Activated naive CD8-positive, alpha-beta T cell treated with anti-CD3 and anti-CD28 coated beads, Interleukin-2, amount 10 ng/mL, durations not matched to agents 7 days and 5 days (primary cell): ENCODE measurements at regions of chr17 and their contacts with region 1.

Region 1: DNA sequence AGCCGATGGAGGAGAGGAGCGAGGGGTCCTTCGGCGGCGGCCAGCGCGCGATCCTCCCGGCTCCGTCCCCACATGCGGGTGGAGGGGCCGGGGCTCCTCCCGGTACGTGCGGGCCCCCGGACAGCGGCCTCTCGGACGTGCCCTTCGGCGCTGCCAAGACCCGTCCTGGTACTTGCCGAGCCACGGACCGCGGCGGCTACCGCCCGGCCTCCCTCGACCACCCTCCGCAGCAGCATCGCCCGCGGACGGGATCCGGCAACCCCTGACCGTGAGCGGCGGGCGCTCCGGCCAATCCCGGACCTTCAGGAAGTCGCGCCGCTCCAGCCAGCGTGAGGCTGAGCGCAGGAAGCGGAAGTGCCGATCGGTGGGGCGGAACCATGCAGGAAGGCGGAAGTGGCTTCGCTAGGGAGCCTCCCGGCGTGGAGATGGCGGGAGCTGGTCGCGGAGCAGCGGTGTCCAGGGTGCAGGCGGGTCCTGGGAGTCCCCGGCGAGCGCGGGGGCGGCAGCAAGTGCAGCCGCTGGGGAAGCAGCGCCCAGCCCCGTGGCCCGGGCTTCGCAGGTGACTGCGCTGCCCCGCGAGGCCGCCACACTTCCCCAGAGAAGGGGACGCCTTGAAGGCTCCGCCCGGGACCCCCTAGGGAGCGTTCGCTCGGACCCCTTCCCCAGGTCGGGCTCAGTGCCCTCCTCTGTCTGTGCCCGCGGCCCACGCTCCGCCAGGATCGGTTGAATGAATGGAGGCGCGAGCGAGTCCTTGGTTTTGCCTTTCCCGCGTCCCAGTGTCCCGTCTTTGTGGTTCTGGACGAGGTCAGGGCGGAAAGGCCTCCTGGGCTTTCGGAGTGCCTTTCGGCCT is at the starts of genes CCDC137 and OXLD1:
- DNase-seq: peak; percentile 93
- ATAC-seq: peak; percentile 89
- H3K4me3 Mint-ChIP-seq: peak within 1 kb of the TSS; percentile 90
- H3K27ac Mint-ChIP-seq: peak within 1 kb of the TSS; percentile 98
- H3K4me1 Mint-ChIP-seq: peaks cover 43% of the 10 kb centered on the region
- H3K27me3 Mint-ChIP-seq: no peaks in the 10 kb centered on the region
- total RNA-seq, gene CCDC137: 31.3 to 32.0 TPM
- total RNA-seq, gene OXLD1: 56.6 to 60.1 TPM

Region 2: DNA sequence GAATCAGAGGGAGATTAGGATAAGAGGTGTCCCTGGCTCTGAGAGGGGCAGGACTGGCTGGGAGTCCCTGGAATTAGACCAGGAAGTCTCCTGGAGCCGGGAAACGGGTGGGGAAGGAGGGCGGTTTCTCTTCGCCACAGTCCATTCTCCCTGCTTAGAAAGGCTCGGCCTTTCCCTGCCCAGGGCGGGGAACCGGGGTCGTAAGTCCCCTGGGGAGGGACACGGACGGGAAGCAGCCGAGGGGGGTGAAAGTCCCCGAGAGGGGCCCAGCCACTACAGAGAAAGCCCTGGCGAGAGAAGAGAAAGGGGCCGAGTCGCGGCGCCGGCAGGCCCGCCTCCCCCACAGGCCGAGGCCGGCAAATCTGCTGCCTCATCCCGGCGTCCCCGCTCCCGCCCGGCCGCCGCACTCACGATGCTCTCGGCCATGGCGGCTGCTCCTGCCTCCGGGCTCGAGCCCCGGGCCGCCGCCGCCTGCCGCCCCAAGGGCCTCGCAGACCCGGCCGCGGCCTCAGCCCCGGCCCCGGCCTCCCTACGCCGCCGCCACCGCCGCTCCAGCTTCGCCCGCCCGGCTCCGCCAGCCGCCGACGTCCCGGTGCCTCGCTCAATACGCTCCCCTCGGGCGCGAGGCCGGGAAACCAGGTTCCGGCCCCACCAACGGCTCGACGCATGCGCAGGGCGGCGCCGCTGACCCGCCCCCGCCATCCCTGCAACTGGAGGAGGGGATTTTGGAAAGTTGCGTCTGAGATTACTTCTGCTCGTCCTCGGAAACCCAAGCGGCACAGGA is 29.9 kb before region 1 on chr17 and contains the starts of genes NPLOC4 and TSPAN10:
- POLR2A ChIA-PET with region 1: interaction called, 12 read pairs
- DNase-seq: peak; percentile 93
- ATAC-seq: peak; percentile 93
- H3K4me3 Mint-ChIP-seq: peak within 1 kb of the TSS; percentile 90
- H3K27ac Mint-ChIP-seq: peak within 1 kb of the TSS; percentile 68
- H3K4me1 Mint-ChIP-seq: peaks cover 14% of the 10 kb centered on the region
- H3K27me3 Mint-ChIP-seq: no peaks in the 10 kb centered on the region
- total RNA-seq, gene NPLOC4: 96.9 to 109 TPM
- total RNA-seq, gene TSPAN10: 0.36 to 0.99 TPM

Region 3: GRCh38 chr17:81651692-81652091 is 14.9 kb before region 1 on chr17:
- POLR2A ChIA-PET with region 1: interaction called, 45 read pairs
- DNase-seq: no peak
- ATAC-seq: no peak
- H3K4me3 Mint-ChIP-seq: peak overlapping the region; percentile 50
- H3K27ac Mint-ChIP-seq: no peak overlapping the region
- H3K4me1 Mint-ChIP-seq: peaks cover 10% of the 10 kb centered on the region
- H3K27me3 Mint-ChIP-seq: peaks cover 21% of the 10 kb centered on the region

Region 4: DNA sequence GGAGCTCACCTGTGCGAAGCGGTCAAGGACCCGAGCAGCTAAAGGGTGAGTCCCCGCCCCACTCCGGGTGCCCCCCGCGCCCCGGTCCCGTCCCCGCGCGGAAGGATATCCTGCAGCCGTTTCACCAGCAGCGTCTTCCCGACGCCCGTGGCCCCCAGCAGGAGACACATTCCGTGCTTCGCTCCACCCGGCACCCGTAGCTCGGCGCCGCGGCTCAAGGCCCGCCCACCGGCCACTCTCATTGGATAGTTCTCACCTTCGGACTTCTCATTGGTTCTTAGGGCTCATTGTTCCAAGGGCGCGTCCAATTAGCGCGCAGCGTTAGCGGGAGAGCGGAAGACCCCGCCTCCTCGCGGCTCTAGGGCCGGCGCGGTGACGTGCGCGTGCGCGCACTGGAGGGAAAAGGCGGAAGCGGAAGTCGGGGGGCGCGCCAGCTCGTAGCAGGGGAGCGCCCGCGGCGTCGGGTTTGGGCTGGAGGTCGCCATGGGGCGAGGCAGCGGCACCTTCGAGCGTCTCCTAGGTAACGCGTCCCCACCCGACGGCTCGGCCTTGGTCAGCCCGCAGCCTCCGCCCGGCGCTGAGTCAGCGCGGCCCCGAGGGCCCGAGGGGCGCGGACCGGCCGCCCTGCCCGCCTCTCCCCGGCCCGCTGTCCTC is 17.1 kb after region 1 on chr17 and contains the starts of genes ARL16 and HGS:
- POLR2A ChIA-PET with region 1: interaction called, 54 read pairs
- DNase-seq: peak; percentile 98
- ATAC-seq: peak; percentile 98
- H3K4me3 Mint-ChIP-seq: peak within 1 kb of the TSS; percentile 98
- H3K27ac Mint-ChIP-seq: peak within 1 kb of the TSS; percentile 90
- H3K4me1 Mint-ChIP-seq: peaks cover 24% of the 10 kb centered on the region
- H3K27me3 Mint-ChIP-seq: no peaks in the 10 kb centered on the region
- total RNA-seq, gene ARL16: 17.7 to 19.0 TPM
- total RNA-seq, gene HGS: 152 to 164 TPM